ENCODE measurements at regions of chr17 and their contacts with region 1.

Region 1: DNA sequence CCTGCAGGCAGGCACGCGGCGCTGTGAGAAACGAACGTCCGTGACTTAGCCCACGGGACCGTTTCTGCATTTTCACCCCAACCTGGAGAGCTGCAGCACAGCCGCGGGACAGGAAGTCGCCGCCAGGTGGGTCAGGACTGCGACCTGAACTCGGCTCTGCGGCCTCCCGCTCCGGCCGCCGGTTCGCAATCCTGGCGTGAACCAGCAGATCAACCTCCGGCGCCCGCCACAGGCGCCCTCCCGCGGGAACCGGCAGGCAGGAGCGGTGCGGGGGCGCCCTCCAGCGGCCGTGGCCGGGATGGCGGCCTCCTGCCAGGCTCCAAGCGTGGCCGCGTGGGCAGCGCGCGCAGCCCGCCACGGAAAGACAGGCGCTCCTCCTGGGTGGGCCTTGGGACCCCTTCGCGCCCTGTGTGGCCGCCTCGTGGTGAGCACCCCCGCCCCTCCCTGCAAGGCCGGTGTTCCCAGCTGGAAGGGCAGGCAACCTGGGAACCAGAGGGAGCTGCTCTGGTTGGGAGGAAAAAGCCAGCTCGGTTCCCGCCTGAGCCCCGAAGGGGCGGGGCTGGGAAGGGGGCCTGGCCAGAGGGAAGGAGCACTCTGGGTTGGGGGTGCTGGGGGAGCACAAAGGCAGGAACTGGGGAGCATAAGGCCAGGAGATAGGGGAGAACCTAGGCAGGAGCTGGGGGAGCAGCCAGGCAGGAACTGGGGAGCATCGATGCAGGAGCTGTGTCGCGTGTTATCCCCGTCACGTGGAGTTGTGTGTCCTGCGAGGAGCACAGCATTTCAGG is 28.2 kb downstream of the ACTG1 start:
- DNase-seq: peak; percentile 94
- ATAC-seq: peak; percentile 67
- H3K4me3 Mint-ChIP-seq: peak overlapping the region; percentile 19
- H3K27ac Mint-ChIP-seq: no peak overlapping the region
- H3K4me1 Mint-ChIP-seq: peaks cover 25% of the 10 kb centered on the region
- H3K27me3 Mint-ChIP-seq: peaks cover 11% of the 10 kb centered on the region
- CTCF ChIP-seq: peak; percentile 70

Region 2: DNA sequence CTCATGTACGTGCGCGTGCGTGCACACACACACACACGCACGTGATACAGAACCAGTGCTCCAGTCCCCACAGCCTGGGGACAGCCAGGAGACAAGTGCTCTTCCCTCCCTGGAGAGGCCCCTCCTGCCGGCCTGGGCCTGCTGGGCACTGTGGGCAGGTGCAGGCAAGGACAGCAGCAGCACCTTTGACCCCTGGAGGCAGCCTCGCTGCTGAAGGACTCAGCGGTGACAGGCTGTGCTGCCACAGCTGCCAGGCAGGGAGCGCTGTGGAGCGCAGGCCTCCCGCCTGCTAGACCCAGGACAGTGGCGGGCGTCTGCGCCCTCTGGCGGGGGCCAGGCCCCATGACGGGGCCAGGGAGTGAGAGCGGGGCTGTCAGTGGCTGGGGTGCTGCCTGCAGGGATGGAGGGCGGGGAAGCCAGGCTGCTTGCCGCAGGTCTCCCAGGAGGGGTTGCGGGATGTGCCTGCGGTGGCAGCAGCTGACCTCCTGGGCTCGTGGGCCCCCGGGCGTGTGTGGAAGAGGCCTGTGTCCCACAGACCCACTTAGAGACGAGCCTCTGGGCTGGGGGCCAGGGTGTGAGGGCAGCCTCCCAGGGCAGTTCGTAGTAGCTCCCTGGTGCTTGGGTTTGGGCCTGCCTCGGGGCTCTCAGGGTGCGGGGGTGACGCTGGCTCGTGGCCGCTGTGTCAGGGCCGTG is 382.6 kb before region 1 on chr17:
- CTCF ChIA-PET with region 1: no interaction called
- POLR2A ChIA-PET with region 1: no interaction called
- intact Hi-C with region 1: loop called (anchors 1 kb)
- DNase-seq: peak; percentile 84
- ATAC-seq: peak; percentile 100
- H3K4me3 Mint-ChIP-seq: no peak overlapping the region
- H3K27ac Mint-ChIP-seq: no peak overlapping the region
- H3K4me1 Mint-ChIP-seq: peaks cover 3% of the 10 kb centered on the region
- H3K27me3 Mint-ChIP-seq: peaks cover 10% of the 10 kb centered on the region
- CTCF ChIP-seq: peak; percentile 91

Region 3: GRCh38 chr17:81253358-81254131 is 230.8 kb before region 1 on chr17:
- CTCF ChIA-PET with region 1: interaction called, 26 read pairs
- POLR2A ChIA-PET with region 1: no interaction called
- intact Hi-C with region 1: loop called (anchors 1 kb)
- DNase-seq: peak; percentile 35
- ATAC-seq: peak; percentile 88
- H3K4me3 Mint-ChIP-seq: no peak overlapping the region
- H3K27ac Mint-ChIP-seq: no peak overlapping the region
- H3K4me1 Mint-ChIP-seq: peaks cover 11% of the 10 kb centered on the region
- H3K27me3 Mint-ChIP-seq: no peaks in the 10 kb centered on the region
- CTCF ChIP-seq: no peak

Region 4: GRCh38 chr17:81346090-81346907 is 138.1 kb before region 1 on chr17:
- CTCF ChIA-PET with region 1: interaction called, 3 read pairs
- POLR2A ChIA-PET with region 1: no interaction called
- intact Hi-C with region 1: loop called (anchors 1 kb)
- DNase-seq: peak; percentile 87
- ATAC-seq: peak; percentile 96
- H3K4me3 Mint-ChIP-seq: peak overlapping the region; percentile 74
- H3K27ac Mint-ChIP-seq: no peak overlapping the region
- H3K4me1 Mint-ChIP-seq: peaks cover 20% of the 10 kb centered on the region
- H3K27me3 Mint-ChIP-seq: peaks cover 24% of the 10 kb centered on the region
- CTCF ChIP-seq: no peak

Region 5: DNA sequence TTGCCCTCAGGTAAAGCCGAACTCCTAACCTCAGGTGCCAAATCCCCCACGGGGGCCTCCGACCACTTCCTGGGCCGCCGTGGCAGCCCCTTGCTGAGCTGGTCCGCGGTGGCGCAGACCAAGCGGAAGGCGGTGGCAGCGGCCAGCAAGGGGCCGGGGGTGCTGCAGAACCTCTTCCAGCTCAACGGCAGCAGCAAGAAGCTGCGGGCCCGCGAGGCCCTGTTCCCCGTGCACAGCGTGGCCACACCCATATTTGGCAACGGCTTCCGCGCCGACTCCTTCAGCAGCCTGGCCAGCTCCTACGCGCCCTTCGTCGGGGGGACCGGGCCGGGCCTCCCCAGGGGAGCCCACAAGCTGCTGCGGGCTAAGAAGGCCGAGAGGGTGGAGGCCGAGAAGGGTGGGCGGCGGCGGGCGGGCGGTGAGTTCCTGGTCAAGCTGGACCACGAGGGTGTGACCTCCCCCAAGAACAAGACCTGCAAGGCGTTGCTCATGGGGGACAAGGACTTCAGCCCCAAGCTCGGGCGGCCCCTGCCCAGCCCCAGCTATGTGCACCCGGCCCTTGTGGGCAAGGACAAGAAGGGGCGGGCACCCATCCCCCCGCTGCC is 23.4 kb before region 1 on chr17:
- CTCF ChIA-PET with region 1: no interaction called
- POLR2A ChIA-PET with region 1: no interaction called
- intact Hi-C with region 1: no loop called
- DNase-seq: no peak
- ATAC-seq: no peak
- H3K4me3 Mint-ChIP-seq: no peak overlapping the region
- H3K27ac Mint-ChIP-seq: no peak overlapping the region
- H3K4me1 Mint-ChIP-seq: no peaks in the 10 kb centered on the region
- H3K27me3 Mint-ChIP-seq: no peaks in the 10 kb centered on the region
- CTCF ChIP-seq: no peak

Region 6: DNA sequence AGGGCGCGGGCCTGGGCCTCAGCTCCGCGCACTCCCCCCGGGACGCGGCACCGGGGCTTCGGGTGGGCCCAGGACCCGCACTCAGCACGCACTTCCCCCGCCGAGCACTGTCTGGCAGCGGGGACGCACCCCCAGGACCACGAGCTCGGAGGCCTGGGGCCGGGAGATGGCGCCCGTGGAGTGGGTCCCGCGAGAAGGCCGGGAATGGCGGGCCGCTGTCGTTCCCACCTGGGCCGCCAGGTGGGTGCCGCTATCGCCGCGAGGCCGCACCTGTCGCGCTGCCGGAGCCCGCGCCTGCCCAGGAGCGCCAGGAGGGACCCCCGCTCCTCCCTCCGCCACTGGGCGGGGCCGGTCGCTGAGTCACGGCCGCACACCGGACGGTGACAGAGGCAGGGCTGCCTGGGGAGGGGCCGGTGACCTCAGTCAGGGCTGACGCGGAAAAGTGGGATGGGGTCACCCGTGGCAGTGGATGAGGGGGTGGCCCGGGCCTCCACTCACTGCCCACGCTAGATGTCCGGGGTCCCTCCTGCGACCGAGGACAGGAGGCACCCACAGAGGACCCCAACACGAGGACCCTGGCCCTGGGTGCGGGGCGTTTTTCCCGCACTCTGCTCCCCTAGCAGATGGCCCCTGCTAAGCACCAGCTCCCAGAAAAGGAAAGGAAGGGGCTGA is 35.0 kb after region 1 on chr17:
- CTCF ChIA-PET with region 1: interaction called, 7 read pairs
- POLR2A ChIA-PET with region 1: interaction called, 88 read pairs
- intact Hi-C with region 1: no loop called
- DNase-seq: peak; percentile 67
- ATAC-seq: peak; percentile 11
- H3K4me3 Mint-ChIP-seq: peak overlapping the region; percentile 93
- H3K27ac Mint-ChIP-seq: peak overlapping the region; percentile 68
- H3K4me1 Mint-ChIP-seq: peaks cover 45% of the 10 kb centered on the region
- H3K27me3 Mint-ChIP-seq: no peaks in the 10 kb centered on the region
- CTCF ChIP-seq: no peak

Region 7: DNA sequence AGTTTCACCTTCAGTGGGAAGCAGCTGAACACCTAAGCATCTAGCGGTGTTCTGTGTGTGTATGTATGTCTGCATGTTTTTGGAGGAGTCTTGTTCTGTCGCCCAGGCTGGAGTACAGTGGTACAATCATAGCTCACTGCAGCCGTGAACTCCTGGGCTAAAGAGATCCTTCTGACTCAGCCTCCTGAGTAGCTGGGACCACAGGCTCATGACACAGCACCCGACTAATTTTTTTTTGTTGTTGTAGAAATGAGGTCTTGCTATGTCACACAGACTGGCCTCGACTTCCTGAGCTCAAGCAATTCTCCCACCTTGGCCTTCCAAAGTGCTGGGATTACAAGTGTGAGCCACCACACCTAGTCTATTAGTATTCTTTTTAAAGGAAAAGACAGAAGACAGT is 98.0 kb after region 1 on chr17:
- CTCF ChIA-PET with region 1: no interaction called
- POLR2A ChIA-PET with region 1: interaction called, 18 read pairs
- intact Hi-C with region 1: no loop called
- DNase-seq: no peak
- ATAC-seq: no peak
- H3K4me3 Mint-ChIP-seq: no peak overlapping the region
- H3K27ac Mint-ChIP-seq: no peak overlapping the region
- H3K4me1 Mint-ChIP-seq: peaks cover 12% of the 10 kb centered on the region
- H3K27me3 Mint-ChIP-seq: no peaks in the 10 kb centered on the region
- CTCF ChIP-seq: no peak

Region 8: DNA sequence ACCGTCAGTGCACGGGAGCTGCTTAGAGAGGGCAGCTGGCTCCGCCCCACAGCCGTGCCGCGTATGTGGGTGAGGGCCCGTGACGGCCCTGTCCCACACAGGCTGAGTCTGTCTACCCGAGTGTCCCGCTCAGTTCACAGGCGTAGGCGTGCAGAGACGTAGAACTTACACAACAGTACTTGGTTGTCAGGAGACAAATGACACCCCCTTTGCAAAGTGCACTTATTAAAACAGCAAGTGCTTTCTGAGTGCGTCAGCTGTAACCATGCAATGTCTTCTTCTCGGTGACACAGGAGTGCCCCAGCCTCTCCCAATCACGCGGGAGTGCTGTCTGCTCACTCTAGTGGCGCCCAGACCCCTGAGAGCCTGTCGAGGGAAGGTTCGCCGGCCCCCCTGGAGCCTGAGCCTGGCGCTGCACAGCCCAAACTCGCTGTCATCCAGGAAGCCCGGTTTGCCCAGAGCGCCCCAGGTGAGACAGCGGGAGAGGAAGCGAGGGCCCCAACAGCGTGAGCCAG is 1099.4 kb after region 1 on chr17:
- CTCF ChIA-PET with region 1: no interaction called
- POLR2A ChIA-PET with region 1: no interaction called
- intact Hi-C with region 1: no loop called
- DNase-seq: no peak
- ATAC-seq: no peak
- H3K4me3 Mint-ChIP-seq: no peak overlapping the region
- H3K27ac Mint-ChIP-seq: no peak overlapping the region
- H3K4me1 Mint-ChIP-seq: peaks cover 18% of the 10 kb centered on the region
- H3K27me3 Mint-ChIP-seq: no peaks in the 10 kb centered on the region
- CTCF ChIP-seq: no peak